H1 (cell line): ENCODE measurements at regions of chr14 and their contacts with region 1.

Region 1: GRCh38 chr14:34098045-34098984 is 147.4 kb upstream of the EGLN3 start:
- DNase-seq: peak in 1 of 2 experiments; percentile 47
- H3K4me3 ChIP-seq: no peak overlapping the region
- H3K27ac ChIP-seq: no peak overlapping the region
- H3K4me1 ChIP-seq: no peaks in the 10 kb centered on the region
- H3K27me3 ChIP-seq: no peaks in the 10 kb centered on the region
- CTCF ChIP-seq: peak in 2 of 3 experiments; percentile 56 to 69; a peak in 3 of 4 replicates
- EP300 ChIP-seq: no peak
- POLR2A ChIP-seq: no peak
- RAD21 ChIP-seq: peak; percentile 83 to 89

Region 2: DNA sequence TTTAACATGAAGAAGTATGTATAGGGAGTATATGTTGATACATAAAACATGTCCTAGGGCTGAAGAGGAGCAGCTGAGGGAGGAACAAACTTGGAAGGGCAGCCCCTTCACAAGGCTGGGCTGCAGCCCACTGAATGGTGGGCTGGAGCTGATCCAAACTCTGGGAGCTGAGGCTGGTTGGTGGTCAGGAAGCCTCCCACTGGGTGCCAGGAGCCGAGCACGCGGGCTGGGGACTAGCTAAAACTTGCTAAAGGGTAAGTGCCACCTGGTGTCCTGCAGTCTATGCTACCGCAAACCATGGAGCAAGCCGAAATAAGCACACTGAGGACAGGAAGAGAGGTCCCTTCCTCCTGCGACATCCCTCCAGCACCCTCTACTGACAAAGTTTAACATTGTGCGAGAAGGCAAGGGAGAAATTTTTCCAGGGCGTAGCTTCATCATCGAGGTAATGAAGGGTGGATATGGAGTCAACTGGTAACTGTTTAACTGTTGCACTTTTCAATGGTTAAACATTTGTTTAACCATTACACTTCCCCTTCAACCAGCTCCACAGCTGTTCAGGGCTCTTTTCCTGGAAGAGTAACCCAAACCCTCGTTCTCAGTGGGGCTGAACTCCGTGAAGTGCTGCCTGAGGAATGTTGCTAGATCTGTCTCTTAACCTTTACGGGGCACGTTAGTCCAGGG is 189.6 kb before region 1 on chr14:
- CTCF ChIA-PET with region 1: interaction called, 11 read pairs
- POLR2A ChIA-PET with region 1: no interaction called
- DNase-seq: no peak
- H3K4me3 ChIP-seq: no peak overlapping the region
- H3K27ac ChIP-seq: no peak overlapping the region
- H3K4me1 ChIP-seq: no peaks in the 10 kb centered on the region; a peak in 1 of 7 replicates
- H3K27me3 ChIP-seq: no peaks in the 10 kb centered on the region
- CTCF ChIP-seq: peak; percentile 48 to 62 (median 52)
- EP300 ChIP-seq: no peak
- POLR2A ChIP-seq: no peak
- RAD21 ChIP-seq: peak; percentile 65

Region 3: GRCh38 chr14:34087556-34087955 is 10.8 kb before region 1 on chr14:
- CTCF ChIA-PET with region 1: interaction called, 12 read pairs
- POLR2A ChIA-PET with region 1: no interaction called
- DNase-seq: no peak
- H3K4me3 ChIP-seq: no peak overlapping the region
- H3K27ac ChIP-seq: no peak overlapping the region
- H3K4me1 ChIP-seq: no peaks in the 10 kb centered on the region; a peak in 1 of 7 replicates
- H3K27me3 ChIP-seq: no peaks in the 10 kb centered on the region
- CTCF ChIP-seq: no peak
- EP300 ChIP-seq: no peak
- POLR2A ChIP-seq: no peak
- RAD21 ChIP-seq: no peak

Region 4: DNA sequence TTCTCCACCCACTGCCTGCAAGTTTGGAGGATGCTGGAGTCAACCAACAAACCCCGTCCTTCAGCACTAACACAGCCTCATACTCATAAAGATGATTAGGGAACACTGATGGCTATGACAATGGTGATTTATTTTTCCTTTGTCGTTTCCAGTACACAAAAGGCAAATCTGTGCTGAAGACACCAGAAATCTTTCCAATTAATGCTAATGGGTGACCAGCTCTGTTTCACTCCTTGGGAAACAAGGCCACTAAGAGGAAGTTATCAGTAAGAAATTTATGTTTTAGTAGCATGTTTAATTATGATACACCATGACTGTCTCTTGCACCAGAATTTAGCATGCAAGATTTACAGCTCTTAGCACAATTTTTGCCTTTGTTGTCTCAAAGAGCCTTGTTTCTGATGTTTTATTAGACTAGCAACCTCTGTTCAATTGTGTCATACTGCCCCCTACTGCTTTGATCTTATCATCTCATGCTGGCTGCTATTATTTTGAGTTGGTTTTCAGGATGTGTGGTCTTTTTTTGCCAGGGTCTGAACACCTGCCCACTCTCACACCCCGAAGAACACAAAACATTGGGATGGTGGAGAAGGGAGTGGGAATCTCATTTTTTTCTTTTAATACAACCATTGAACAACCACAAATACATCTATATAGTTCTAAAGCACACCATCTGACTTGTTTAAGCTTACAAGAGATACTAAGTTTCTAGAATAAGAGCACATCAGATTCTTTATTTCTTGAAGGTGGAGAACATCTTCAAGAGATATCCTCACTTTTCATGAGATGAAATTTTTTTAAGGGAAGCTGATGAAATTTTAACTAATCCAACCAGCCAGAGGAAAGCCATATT is 202.8 kb after region 1 on chr14:
- CTCF ChIA-PET with region 1: interaction called, 27 read pairs
- POLR2A ChIA-PET with region 1: no interaction called
- DNase-seq: no peak
- H3K4me3 ChIP-seq: no peak overlapping the region
- H3K27ac ChIP-seq: no peak overlapping the region
- H3K4me1 ChIP-seq: peaks cover 0 to 3% (median 0%) of the 10 kb centered on the region in 4 experiments; a peak in 1 of 7 replicates
- H3K27me3 ChIP-seq: no peaks in the 10 kb centered on the region
- CTCF ChIP-seq: peak in 2 of 3 experiments; percentile 56 to 70; a peak in 2 of 4 replicates
- EP300 ChIP-seq: no peak
- POLR2A ChIP-seq: no peak
- RAD21 ChIP-seq: peak; percentile 83 to 85